Activated naive CD4-positive, alpha-beta T cell treated with anti-CD3 and anti-CD28 coated beads, Interleukin-2, amount 10 ng/mL, durations not matched to agents 7 days and 5 days (primary cell): ENCODE measurements at regions of chr6 and their contacts with region 1.

Region 1: GRCh38 chr6:118565311-118565960 is 17.3 kb downstream of the PLN start:
- DNase-seq: no peak
- H3K4me3 Mint-ChIP-seq: no peak overlapping the region
- H3K27ac Mint-ChIP-seq: peak overlapping the region; percentile 37
- H3K4me1 Mint-ChIP-seq: peaks cover 9% of the 10 kb centered on the region
- H3K27me3 Mint-ChIP-seq: no peaks in the 10 kb centered on the region

Region 2: DNA sequence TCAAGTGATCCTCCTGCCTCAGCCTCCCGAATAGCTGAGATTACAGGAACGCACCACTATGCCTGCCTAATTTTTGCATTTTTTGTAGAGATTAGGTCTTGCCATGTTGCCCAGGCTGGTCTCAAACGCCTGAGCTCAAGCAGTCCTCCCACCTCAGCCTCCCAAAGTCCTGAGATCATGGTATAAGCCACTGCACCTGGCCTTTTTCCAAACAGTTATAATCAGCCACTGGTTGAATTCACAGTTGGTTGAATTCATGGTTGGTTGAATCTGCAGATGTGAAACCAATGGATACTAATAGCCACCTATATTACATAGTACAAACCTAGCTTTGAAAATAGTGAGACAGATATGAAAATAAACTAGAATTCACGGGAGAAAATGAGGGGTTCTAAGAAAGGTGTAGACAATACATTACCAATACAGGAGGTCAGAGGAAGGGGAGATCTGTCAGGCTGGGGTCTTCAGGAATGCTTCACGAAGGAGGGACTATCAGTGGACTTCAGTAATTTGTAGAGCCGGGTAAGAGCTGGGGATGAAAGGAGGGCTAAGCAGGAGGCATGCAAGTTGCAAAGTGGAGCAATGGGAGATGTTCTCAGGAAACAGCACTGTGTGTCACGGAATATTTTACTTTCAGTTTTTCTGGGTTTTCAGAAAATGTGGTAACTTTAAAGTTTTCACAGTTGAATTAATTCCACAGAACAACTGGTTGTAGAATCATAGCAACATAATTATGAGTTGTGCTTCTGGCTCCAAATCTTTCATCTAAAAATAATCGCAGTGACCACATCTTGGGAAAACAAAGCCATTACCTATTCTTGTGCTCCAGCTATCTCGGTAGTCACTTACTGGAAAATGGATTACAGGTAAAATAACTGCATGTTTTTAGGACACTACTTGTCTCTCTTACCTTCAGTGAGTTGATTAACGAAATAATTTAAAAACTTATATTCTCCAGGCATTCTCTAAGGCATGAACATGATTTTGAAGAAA is 98.9 kb after region 1 on chr6:
- CTCF ChIA-PET with region 1: interaction called, 12 read pairs
- DNase-seq: no peak
- H3K4me3 Mint-ChIP-seq: peak overlapping the region; percentile 65
- H3K27ac Mint-ChIP-seq: peak overlapping the region; percentile 78
- H3K4me1 Mint-ChIP-seq: peaks cover 48% of the 10 kb centered on the region
- H3K27me3 Mint-ChIP-seq: no peaks in the 10 kb centered on the region

Region 3: DNA sequence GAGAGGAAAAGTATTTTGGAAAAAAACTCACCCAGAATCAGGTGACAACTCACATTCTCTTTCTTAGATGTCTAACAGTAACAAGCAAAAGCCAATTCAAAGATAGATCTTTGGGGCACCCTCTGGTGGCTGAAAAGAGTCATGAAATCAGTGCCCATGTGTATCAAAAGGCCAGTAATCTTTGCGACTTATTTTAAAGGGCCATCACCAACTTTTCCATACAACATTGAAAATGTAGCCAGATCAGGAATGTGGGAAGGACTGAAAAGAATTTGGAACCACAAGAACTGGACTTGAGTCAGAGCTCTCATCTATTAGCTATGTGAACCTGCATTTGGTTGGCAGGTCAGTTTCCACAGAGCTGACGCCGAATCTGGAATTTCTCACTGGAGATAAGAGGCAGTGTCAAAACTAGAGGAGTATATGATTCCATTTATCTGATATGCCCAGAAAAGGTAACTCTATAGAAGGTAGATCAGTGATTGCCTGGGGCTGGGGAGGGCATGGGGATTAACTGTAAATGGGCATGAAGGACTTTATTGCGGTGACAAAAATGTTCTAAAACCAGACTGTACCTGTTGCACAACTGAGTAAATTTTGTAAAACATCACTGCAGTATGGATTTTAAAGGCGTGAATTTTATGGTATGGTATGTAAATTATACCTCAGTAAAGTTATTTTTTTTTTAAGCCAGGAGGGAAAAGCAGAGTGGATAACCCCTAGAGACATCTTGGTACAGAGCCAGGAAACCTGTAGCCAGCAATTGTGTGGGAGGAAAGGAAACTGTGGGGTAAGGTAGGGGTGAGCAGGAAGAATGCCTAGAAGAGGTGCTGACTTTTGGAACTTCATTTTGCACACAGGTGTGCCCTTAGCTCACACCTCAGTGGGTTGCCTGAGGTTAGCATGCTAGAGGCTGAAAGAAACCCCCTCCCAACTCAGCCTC is 211.4 kb after region 1 on chr6:
- CTCF ChIA-PET with region 1: interaction called, 23 read pairs
- DNase-seq: peak; percentile 79
- H3K4me3 Mint-ChIP-seq: no peak overlapping the region
- H3K27ac Mint-ChIP-seq: no peak overlapping the region
- H3K4me1 Mint-ChIP-seq: peaks cover 14% of the 10 kb centered on the region
- H3K27me3 Mint-ChIP-seq: peaks cover 21% of the 10 kb centered on the region

Region 4: DNA sequence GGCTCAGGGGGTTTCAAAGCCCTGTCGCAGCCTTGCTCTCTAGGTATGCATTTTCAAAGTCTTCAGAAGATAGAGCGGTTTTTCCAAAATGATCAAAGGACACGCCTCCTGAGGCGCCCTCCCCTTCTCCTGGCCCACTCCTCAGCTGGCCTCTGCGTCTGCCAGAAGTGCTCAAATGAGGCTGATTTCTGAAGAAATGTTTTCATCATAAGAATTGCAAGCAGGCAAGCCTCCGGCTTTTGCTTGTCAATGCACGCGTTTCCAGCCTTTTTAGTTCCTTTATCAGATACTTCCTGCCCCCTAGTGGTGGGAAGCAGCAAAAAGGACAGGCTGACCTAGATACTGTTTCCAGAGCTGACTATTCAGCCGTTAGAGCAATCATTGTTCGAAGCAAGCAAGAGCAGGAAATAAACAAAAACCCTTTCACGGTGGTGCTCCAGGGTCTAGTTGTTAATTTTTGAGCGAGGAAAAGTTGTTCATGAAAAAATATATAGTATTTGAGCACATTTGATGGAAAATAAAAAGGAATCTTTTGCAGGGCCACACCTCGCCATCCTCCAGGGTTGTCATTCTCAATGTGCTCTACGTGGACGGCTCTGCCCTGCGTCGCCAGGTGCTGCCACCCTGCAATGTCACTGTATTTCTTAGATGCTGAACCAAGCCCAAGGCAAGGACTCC is 235.1 kb after region 1 on chr6:
- CTCF ChIA-PET with region 1: interaction called, 23 read pairs
- DNase-seq: peak; percentile 91
- H3K4me3 Mint-ChIP-seq: peak overlapping the region; percentile 29
- H3K27ac Mint-ChIP-seq: peak overlapping the region; percentile 76
- H3K4me1 Mint-ChIP-seq: peaks cover 42% of the 10 kb centered on the region
- H3K27me3 Mint-ChIP-seq: no peaks in the 10 kb centered on the region

Region 5: GRCh38 chr6:119110601-119111548 is 545.4 kb after region 1 on chr6:
- CTCF ChIA-PET with region 1: interaction called, 13 read pairs
- DNase-seq: peak; percentile 50
- H3K4me3 Mint-ChIP-seq: no peak overlapping the region
- H3K27ac Mint-ChIP-seq: no peak overlapping the region
- H3K4me1 Mint-ChIP-seq: peaks cover 12% of the 10 kb centered on the region
- H3K27me3 Mint-ChIP-seq: no peaks in the 10 kb centered on the region